ENCODE measurements at regions of chr11 and their contacts with region 1.

Region 1: DNA sequence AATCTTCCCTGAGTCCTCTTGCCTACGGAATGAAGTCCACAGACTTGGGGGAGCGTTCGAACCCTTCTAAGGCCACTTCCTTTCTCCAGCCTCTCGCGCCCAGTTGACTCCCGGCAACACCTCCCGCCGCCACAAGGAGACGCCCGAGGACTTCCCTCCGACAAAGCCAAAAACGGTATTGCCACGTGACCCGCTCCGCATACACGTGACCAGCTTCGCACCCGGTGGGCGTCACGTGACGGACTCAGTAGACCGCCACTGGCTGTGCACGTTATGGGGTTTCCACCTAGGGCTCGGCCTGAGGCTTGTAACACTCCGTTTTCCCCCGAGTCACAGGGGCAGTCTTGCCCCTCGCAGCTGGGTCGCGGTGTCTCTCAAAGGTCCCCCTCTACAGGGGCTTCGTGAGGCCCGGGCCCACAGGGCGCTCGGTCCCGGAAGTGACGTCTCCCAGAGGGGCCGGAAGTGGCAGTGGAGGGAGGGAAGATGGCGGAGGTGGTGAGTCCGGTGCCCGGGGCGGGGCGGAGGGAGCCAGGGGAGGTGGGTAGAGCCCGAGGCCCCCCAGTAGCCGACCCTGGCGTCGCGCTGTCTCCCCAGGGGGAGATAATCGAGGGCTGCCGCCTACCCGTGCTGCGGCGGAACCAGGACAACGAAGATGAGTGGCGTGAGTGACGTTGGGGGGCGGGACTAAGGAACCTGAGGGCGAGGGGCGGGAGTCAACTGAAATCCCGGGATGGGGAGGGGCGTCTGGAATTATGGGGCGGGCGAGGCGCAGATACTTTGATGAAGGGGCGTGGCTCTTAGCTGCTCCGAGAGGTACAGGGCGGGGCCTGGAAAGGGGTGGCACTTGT is at the start of gene KAT5:
- DNase-seq: peak; percentile 99
- H3K4me3 ChIP-seq: peak within 1 kb of the TSS; percentile 89
- H3K27ac ChIP-seq: peak within 1 kb of the TSS; percentile 82
- H3K4me1 ChIP-seq: peaks cover 19% of the 10 kb centered on the region
- CTCF ChIP-seq: peak; percentile 86
- total RNA-seq, gene KAT5: 87.9 and 97.1 TPM in 2 replicates

Region 2: DNA sequence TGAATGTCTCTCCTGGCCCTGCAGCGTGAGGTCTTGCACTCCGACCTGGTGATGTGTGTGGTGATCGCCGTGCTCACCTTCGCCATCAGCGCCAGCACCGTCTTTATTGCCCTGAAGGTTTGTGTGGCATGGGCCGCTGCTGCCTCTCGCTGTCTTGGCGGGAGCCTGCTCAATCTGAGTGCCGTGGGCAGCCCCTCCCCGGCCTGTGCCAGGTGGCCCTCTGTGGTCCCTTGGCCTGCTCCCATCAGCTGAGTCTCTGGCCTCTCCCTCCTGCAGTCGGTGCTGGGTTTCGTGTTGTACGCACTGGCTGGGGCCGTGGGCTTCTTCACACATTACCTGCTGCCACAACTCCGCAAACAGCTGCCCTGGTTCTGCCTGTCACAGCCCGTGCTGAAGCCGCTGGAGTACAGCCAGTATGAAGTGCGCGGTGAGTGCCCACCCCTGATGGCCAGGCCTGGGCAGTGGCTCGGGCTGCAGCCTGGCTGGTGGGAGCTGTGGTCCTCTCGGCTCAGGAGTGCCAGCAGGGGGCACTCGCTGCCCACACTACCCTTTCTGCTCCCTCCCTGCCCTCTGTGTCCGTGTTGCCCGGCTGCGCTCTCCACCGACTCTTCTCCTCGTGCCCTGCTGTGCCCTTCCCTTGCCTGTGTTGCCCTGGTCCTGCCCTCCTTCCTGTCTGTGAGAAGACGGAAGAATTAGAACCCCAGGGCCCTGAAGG is 86.2 kb before region 1 on chr11:
- CTCF ChIA-PET with region 1: no interaction called
- POLR2A ChIA-PET with region 1: interaction called, 3 read pairs
- intact Hi-C with region 1: loop called (anchors 5 kb)
- DNase-seq: peak; percentile 55
- H3K4me3 ChIP-seq: no peak overlapping the region
- H3K27ac ChIP-seq: no peak overlapping the region
- H3K4me1 ChIP-seq: no peaks in the 10 kb centered on the region
- CTCF ChIP-seq: peak; percentile 81

Region 3: DNA sequence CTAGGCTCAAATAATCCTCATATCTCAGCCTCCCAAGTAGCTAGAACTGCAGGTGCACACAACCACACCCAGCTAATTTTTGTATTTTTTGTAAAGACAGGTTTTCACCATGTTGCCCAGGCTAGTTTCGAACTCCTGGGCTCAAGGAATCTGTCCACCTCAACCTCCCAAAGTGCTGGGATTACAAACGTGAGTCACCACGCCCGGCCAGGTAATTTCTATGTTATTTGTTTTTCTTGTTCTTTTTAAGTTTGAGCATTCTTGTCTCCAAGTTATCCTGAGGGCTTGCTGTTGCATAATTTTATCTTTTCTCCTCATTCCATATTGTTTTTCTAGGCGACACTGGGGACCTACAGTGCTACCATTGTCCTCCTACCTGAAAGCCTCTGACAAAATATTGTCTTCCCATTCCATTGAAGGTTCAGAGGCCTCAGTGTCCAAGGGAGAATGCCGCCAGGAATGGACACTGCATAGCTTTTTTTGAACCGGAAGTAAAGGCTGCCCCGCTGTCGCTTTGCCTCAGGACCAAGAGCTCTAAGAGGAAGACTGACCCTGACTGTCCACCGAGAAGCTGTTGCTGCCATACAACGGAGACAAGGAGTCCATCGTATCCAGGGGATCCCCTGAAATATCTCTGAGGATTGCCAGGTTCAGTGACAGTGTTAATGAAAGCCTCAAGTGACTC is 59.0 kb after region 1 on chr11:
- CTCF ChIA-PET with region 1: no interaction called
- POLR2A ChIA-PET with region 1: no interaction called
- intact Hi-C with region 1: loop called (anchors 2 kb)
- DNase-seq: no peak
- H3K4me3 ChIP-seq: no peak overlapping the region
- H3K27ac ChIP-seq: no peak overlapping the region
- H3K4me1 ChIP-seq: peaks cover 5% of the 10 kb centered on the region
- CTCF ChIP-seq: no peak

Region 4: GRCh38 chr11:65779851-65780577 is 68.0 kb after region 1 on chr11:
- CTCF ChIA-PET with region 1: interaction called, 4 read pairs
- POLR2A ChIA-PET with region 1: interaction called, 3 read pairs
- intact Hi-C with region 1: loop called (anchors 2 kb)
- DNase-seq: peak; percentile 88
- H3K4me3 ChIP-seq: peak overlapping the region; percentile 80
- H3K27ac ChIP-seq: peak overlapping the region; percentile 23
- H3K4me1 ChIP-seq: peaks cover 6% of the 10 kb centered on the region
- CTCF ChIP-seq: peak; percentile 94

Region 5: GRCh38 chr11:65806979-65807378 is 95.0 kb after region 1 on chr11:
- CTCF ChIA-PET with region 1: no interaction called
- POLR2A ChIA-PET with region 1: no interaction called
- intact Hi-C with region 1: no loop called
- DNase-seq: no peak
- H3K4me3 ChIP-seq: no peak overlapping the region
- H3K27ac ChIP-seq: no peak overlapping the region
- H3K4me1 ChIP-seq: peaks cover 6% of the 10 kb centered on the region
- CTCF ChIP-seq: no peak

Region 6: GRCh38 chr11:65817835-65818742 is 106.1 kb after region 1 on chr11:
- CTCF ChIA-PET with region 1: interaction called, 3 read pairs
- POLR2A ChIA-PET with region 1: interaction called, 3 read pairs
- intact Hi-C with region 1: loop called (anchors 1 kb)
- DNase-seq: peak; percentile 91
- H3K4me3 ChIP-seq: peak overlapping the region; percentile 67
- H3K27ac ChIP-seq: no peak overlapping the region
- H3K4me1 ChIP-seq: peaks cover 5% of the 10 kb centered on the region
- CTCF ChIP-seq: peak; percentile 95

Region 7: DNA sequence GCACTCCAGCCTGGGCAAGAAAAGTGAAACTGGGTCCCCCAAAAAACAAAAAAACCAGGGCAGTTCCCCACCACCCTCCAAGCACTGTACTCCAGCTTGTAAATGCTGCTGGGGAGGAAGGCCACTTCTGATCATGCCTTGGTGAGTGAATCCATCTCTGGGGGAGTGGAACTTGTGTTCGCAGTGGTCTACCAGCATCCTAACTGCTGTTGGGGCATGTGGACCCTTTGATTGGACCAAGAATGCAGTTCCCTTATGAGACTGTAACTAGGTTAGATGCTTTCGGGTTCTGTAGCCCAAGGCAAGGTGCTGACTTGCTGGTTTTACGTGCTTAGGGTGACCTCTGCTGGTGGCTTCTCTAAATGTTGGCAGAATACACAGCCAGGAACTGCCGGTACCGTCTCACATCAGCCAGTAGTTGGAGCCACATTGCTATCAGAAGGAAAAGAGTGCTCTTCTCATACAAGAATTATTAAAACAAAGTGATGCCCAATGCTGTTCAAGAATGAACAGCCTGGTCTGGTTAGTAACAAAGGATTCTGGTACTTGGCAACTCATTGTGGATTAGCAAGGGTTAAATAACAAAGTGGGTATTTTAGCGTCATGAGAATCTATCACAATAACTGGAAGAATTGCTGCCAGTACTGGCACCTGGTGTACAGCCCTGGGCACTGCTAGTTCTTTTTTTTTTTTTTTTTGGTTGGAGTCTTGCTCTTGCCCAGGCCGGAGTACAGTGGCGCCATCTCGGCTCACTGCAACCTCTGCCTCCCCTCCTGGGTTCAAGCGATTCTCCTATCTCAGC is 277.0 kb after region 1 on chr11:
- CTCF ChIA-PET with region 1: no interaction called
- POLR2A ChIA-PET with region 1: no interaction called
- intact Hi-C with region 1: loop called (anchors 1 kb)
- DNase-seq: peak; percentile 94
- H3K4me3 ChIP-seq: no peak overlapping the region
- H3K27ac ChIP-seq: no peak overlapping the region
- H3K4me1 ChIP-seq: no peaks in the 10 kb centered on the region
- CTCF ChIP-seq: peak; percentile 100

Measured in OCI-LY7 (cell line).